CD4-positive, alpha-beta T cell (primary cell): ENCODE measurements at regions of chr7 and their contacts with region 1.

Region 1: GRCh38 chr7:141654551-141654950 is 47.4 kb downstream of the DENND11 start:
- DNase-seq: peak; percentile 32 to 84 (median 52)
- ATAC-seq: peak; percentile 96
- H3K4me3 ChIP-seq: no peak overlapping the region
- H3K4me3 Mint-ChIP-seq: no peak overlapping the region
- H3K27ac ChIP-seq: no peak overlapping the region
- H3K27ac Mint-ChIP-seq: peak overlapping the region; percentile 23
- H3K4me1 ChIP-seq: no peaks in the 10 kb centered on the region
- H3K4me1 Mint-ChIP-seq: peaks cover 11% of the 10 kb centered on the region
- H3K27me3 ChIP-seq: no peaks in the 10 kb centered on the region
- H3K27me3 Mint-ChIP-seq: no peaks in the 10 kb centered on the region
- CTCF ChIP-seq: peak; percentile 69

Region 2: DNA sequence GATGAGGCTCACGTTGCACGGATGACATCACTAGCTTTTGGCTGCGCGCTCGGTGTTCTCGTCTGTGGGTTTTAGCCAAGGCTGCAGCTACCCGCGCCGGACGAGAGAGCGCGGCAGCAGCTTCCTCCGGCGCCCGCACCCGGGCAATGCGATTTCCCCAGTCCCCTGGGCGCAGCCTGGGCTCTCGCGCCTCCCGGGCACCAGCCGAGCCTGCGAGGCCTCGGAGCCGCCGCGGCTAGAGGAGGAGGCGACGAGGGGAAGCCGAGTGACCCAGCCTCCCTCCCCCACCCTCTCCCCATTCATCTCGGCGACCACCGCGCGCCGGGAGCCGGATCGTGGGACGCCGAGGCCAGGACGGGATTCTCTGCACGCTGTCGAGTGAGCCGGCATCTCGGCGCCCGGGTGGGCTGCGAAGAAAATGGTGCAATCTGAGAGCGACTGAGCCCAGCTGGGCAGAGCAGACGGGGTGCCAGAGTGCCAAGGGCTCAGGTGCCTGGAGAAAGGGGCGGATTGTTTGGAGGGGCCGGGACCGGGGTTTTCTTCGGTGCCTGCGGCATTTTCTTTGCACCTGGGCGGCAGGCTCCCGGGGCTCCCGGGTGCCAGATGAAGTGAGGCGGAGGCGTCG is 581.9 kb before region 1 on chr7:
- CTCF ChIA-PET with region 1: no interaction called
- POLR2A ChIA-PET with region 1: no interaction called
- intact Hi-C with region 1: no loop called
- DNase-seq: peak in 5 of 14 experiments; percentile 3 to 45 (median 34)
- ATAC-seq: peak; percentile 34
- H3K4me3 ChIP-seq: peak overlapping the region; percentile 56
- H3K4me3 Mint-ChIP-seq: peak overlapping the region; percentile 81
- H3K27ac ChIP-seq: no peak overlapping the region
- H3K27ac Mint-ChIP-seq: no peak overlapping the region
- H3K4me1 ChIP-seq: peaks cover 35% of the 10 kb centered on the region
- H3K4me1 Mint-ChIP-seq: peaks cover 20% of the 10 kb centered on the region
- H3K27me3 ChIP-seq: peaks cover 43 to 58% of the 10 kb centered on the region in 2 experiments
- H3K27me3 Mint-ChIP-seq: peaks cover 48% of the 10 kb centered on the region
- CTCF ChIP-seq: no peak

Region 3: DNA sequence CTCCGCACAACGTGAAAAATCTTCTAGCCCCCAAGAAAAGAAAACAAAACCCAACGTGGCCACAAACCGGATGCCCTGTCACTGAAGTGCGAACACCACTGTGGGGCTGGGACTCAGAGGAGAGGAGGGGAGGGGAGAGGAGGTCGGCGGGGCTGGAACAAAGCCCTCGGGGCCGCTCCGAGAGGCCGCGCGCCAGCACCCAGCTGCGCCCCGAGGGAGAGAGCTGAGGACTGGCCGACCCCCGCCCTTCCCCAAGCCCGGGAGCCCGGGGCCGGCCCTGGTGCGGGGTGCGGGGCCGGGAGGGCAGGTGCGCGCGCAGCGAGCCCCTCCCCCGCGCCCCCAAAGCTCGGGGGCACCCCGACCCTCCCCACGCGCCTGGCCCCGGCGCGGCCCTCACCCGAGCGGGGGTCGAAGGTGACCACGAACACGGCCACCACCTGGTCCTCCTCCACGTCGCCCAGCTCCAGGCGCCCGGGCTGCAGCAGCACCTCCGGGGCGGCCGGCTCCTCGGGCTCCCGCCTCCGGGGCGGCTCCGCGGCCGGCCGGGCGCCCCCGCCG is 47.0 kb after region 1 on chr7:
- CTCF ChIA-PET with region 1: interaction called, 6 read pairs
- POLR2A ChIA-PET with region 1: interaction called, 3 read pairs
- intact Hi-C with region 1: loop called in 1 of 2 experiments (anchors 2 kb)
- DNase-seq: peak; percentile 47 to 89 (median 64)
- ATAC-seq: peak; percentile 82
- H3K4me3 ChIP-seq: peak overlapping the region; percentile 68
- H3K4me3 Mint-ChIP-seq: peak overlapping the region; percentile 96
- H3K27ac ChIP-seq: peak overlapping the region in 1 of 2 donors; percentile 76
- H3K27ac Mint-ChIP-seq: peak overlapping the region; percentile 90
- H3K4me1 ChIP-seq: peaks cover 34% of the 10 kb centered on the region
- H3K4me1 Mint-ChIP-seq: peaks cover 54% of the 10 kb centered on the region
- H3K27me3 ChIP-seq: no peaks in the 10 kb centered on the region
- H3K27me3 Mint-ChIP-seq: no peaks in the 10 kb centered on the region
- CTCF ChIP-seq: no peak

Region 4: DNA sequence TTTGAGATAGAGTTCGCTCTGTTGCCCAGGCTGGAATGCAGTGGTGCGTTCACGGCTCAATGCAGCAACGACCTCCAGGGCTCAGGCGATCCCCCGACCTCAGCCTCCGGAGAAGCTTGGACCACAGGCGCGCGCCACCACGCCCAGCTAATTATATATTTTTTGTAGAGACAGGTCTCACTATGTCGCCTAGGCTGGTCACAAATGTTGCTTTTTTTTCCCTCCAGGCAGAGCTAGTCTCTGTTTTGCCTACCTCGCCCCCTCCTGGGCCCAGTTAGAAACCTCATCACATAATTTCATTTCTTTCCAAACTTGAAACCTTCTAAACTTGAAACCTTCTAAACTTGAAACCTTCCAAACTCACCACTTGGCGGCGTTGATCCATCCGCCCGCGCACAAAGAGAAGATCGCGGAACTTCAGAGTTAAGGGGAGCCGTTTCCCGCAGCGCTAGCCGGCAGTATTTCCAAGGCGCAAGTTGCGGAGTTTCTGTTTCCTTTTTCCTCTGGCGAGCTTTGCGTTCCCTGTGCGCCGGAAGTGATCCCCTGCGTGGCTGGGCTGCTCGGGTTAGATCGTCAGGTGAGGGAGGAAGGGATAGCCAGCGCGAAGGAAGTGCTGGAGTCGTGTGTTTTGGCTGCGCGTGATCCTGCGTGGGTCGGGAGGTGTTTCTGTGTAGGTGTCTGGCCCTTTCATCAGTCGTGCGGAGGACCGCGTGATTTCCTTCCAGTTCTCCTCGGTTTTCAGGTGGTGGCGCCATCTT is 83.5 kb after region 1 on chr7 and contains the start of gene SSBP1:
- CTCF ChIA-PET with region 1: interaction called, 9 read pairs
- POLR2A ChIA-PET with region 1: interaction called, 19 read pairs
- intact Hi-C with region 1: loop called (anchors 1 kb)
- DNase-seq: peak; percentile 83 to 97 (median 88)
- ATAC-seq: peak; percentile 82
- H3K4me3 ChIP-seq: peak within 1 kb of the TSS; percentile 76
- H3K4me3 Mint-ChIP-seq: peak within 1 kb of the TSS; percentile 97
- H3K27ac ChIP-seq: peak within 1 kb of the TSS; percentile 86 to 89
- H3K27ac Mint-ChIP-seq: peak within 1 kb of the TSS; percentile 93
- H3K4me1 ChIP-seq: peaks cover 25% of the 10 kb centered on the region
- H3K4me1 Mint-ChIP-seq: peaks cover 46% of the 10 kb centered on the region
- H3K27me3 ChIP-seq: no peaks in the 10 kb centered on the region
- H3K27me3 Mint-ChIP-seq: no peaks in the 10 kb centered on the region
- CTCF ChIP-seq: peak; percentile 95
- total RNA-seq, gene SSBP1: 108 to 116 TPM

Region 5: GRCh38 chr7:141785706-141786552 is 131.4 kb after region 1 on chr7:
- CTCF ChIA-PET with region 1: interaction called, 16 read pairs
- POLR2A ChIA-PET with region 1: interaction called, 3 read pairs
- intact Hi-C with region 1: loop called (anchors 1 kb)
- DNase-seq: peak in 5 of 14 experiments; percentile 20 to 64 (median 46)
- ATAC-seq: peak; percentile 55
- H3K4me3 ChIP-seq: no peak overlapping the region
- H3K4me3 Mint-ChIP-seq: no peak overlapping the region
- H3K27ac ChIP-seq: no peak overlapping the region
- H3K27ac Mint-ChIP-seq: no peak overlapping the region
- H3K4me1 ChIP-seq: no peaks in the 10 kb centered on the region
- H3K4me1 Mint-ChIP-seq: no peaks in the 10 kb centered on the region
- H3K27me3 ChIP-seq: no peaks in the 10 kb centered on the region
- H3K27me3 Mint-ChIP-seq: no peaks in the 10 kb centered on the region
- CTCF ChIP-seq: peak; percentile 84

Region 6: DNA sequence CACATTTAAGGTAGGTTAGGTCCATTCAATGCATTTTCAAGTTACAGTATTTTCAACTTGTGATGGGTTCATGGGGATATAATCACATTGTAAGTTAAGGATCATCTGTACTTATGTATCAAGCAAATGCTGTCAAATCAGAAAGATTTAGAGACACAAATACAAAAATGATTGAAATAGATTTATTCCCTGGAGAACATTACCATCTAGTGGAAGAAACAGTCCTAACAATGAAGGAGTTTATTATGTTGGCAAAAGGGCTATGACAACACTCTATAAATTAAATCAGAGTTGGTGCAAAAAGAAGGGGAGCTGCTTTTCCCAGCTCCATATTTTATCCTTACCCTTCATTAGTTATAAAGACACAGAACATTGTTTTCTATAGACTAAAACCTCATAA is 534.3 kb after region 1 on chr7:
- CTCF ChIA-PET with region 1: no interaction called
- POLR2A ChIA-PET with region 1: no interaction called
- intact Hi-C with region 1: loop called in 1 of 2 experiments (anchors 10 kb)
- DNase-seq: peak in 1 of 14 experiments; percentile 4
- ATAC-seq: no peak
- H3K4me3 ChIP-seq: no peak overlapping the region
- H3K4me3 Mint-ChIP-seq: no peak overlapping the region
- H3K27ac ChIP-seq: no peak overlapping the region
- H3K27ac Mint-ChIP-seq: no peak overlapping the region
- H3K4me1 ChIP-seq: no peaks in the 10 kb centered on the region
- H3K4me1 Mint-ChIP-seq: no peaks in the 10 kb centered on the region
- H3K27me3 ChIP-seq: peaks cover 0 to 10% of the 10 kb centered on the region in 2 experiments
- H3K27me3 Mint-ChIP-seq: peaks cover 9% of the 10 kb centered on the region
- CTCF ChIP-seq: no peak